ENCODE measurements at regions of chr3 and their contacts with region 1.

Region 1: DNA sequence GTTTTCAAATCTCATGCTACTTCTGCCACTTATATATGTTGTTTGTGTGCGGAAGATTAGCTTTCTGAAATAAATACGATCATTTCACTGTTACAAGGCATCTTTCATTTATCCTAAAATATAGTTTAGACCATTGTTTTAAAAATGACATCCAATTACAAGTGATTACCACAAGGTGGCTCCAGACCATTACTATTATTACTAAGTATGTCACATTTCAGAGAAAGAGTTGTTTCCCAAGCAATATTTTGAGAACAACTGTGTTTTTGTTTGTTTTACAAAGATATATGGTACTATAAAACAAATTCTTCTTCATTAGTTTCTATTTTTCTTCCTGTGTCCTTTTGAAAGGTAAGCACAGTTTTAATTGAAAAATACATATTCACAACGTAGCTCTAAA is 136.0 kb upstream of the RAP2B start:
- DNase-seq: peak in 5 of 9 donors; percentile 19 to 30 (median 22)
- ATAC-seq: no peak
- H3K4me3 ChIP-seq: no peak overlapping the region
- H3K4me3 Mint-ChIP-seq: no peak overlapping the region
- H3K27ac ChIP-seq: no peak overlapping the region
- H3K27ac Mint-ChIP-seq: no peak overlapping the region
- H3K4me1 ChIP-seq: no peaks in the 10 kb centered on the region
- H3K4me1 Mint-ChIP-seq: peaks cover 0 to 1% (median 0%) of the 10 kb centered on the region in 7 donors
- H3K27me3 ChIP-seq: peaks cover 0 to 2% of the 10 kb centered on the region in 2 donors
- H3K27me3 Mint-ChIP-seq: peaks cover 7 to 21% (median 14%) of the 10 kb centered on the region in 5 donors

Region 2: GRCh38 chr3:153595186-153595815 is 569.3 kb after region 1 on chr3:
- CTCF ChIA-PET with region 1: no interaction called
- POLR2A ChIA-PET with region 1: no interaction called
- intact Hi-C with region 1: loop called in 1 of 2 experiments (anchors 1 kb)
- DNase-seq: peak in 5 of 9 donors; percentile 1 to 25 (median 11)
- ATAC-seq: peak; percentile 45
- H3K4me3 ChIP-seq: no peak overlapping the region
- H3K4me3 Mint-ChIP-seq: no peak overlapping the region
- H3K27ac ChIP-seq: no peak overlapping the region
- H3K27ac Mint-ChIP-seq: no peak overlapping the region
- H3K4me1 ChIP-seq: no peaks in the 10 kb centered on the region
- H3K4me1 Mint-ChIP-seq: peaks cover 0 to 15% (median 6%) of the 10 kb centered on the region in 7 donors
- H3K27me3 ChIP-seq: no peaks in the 10 kb centered on the region
- H3K27me3 Mint-ChIP-seq: no peaks in the 10 kb centered on the region

Region 3: DNA sequence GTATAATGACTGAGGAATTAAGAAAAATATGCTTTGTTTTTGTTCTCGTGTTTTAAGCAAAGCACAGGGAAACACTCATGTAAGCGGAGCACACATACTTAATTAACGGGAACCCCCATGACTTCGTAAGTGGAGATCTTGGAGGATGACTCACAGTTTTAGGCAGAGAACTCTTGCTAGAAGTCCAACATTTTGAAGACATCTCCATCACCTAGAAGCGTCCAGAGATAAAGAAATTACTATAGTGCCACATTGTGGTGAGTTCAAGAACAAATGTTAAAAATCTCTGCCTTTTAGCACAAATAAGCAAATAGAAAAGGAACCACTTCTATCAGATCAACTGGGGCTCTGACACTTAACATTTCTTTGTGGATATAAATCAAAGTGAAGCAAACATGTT is 901.1 kb after region 1 on chr3:
- CTCF ChIA-PET with region 1: no interaction called
- POLR2A ChIA-PET with region 1: no interaction called
- intact Hi-C with region 1: loop called (anchors 1 to 10 kb)
- DNase-seq: no peak
- ATAC-seq: no peak
- H3K4me3 ChIP-seq: no peak overlapping the region
- H3K4me3 Mint-ChIP-seq: no peak overlapping the region
- H3K27ac ChIP-seq: no peak overlapping the region
- H3K27ac Mint-ChIP-seq: no peak overlapping the region
- H3K4me1 ChIP-seq: no peaks in the 10 kb centered on the region
- H3K4me1 Mint-ChIP-seq: no peaks in the 10 kb centered on the region
- H3K27me3 ChIP-seq: no peaks in the 10 kb centered on the region
- H3K27me3 Mint-ChIP-seq: peaks cover 0 to 21% (median 10%) of the 10 kb centered on the region in 5 donors

Region 4: GRCh38 chr3:154018100-154018696 is 992.2 kb after region 1 on chr3:
- CTCF ChIA-PET with region 1: no interaction called
- POLR2A ChIA-PET with region 1: no interaction called
- intact Hi-C with region 1: loop called in 1 of 2 experiments (anchors 1 kb)
- DNase-seq: peak in 6 of 9 donors; percentile 4 to 21 (median 14)
- ATAC-seq: no peak
- H3K4me3 ChIP-seq: no peak overlapping the region
- H3K4me3 Mint-ChIP-seq: no peak overlapping the region
- H3K27ac ChIP-seq: no peak overlapping the region
- H3K27ac Mint-ChIP-seq: no peak overlapping the region
- H3K4me1 ChIP-seq: no peaks in the 10 kb centered on the region
- H3K4me1 Mint-ChIP-seq: no peaks in the 10 kb centered on the region
- H3K27me3 ChIP-seq: no peaks in the 10 kb centered on the region
- H3K27me3 Mint-ChIP-seq: peaks cover 0 to 13% (median 4%) of the 10 kb centered on the region in 5 donors

Measured in naive thymus-derived CD4-positive, alpha-beta T cell (primary cell).